Activated CD4-positive, alpha-beta T cell treated with anti-CD3 and anti-CD28 coated beads, Interleukin-2, amount 10 ng/mL, durations not matched to agents 7 days and 5 days (primary cell): ENCODE measurements at regions of chr12 and their contacts with region 1.

Region 1: DNA sequence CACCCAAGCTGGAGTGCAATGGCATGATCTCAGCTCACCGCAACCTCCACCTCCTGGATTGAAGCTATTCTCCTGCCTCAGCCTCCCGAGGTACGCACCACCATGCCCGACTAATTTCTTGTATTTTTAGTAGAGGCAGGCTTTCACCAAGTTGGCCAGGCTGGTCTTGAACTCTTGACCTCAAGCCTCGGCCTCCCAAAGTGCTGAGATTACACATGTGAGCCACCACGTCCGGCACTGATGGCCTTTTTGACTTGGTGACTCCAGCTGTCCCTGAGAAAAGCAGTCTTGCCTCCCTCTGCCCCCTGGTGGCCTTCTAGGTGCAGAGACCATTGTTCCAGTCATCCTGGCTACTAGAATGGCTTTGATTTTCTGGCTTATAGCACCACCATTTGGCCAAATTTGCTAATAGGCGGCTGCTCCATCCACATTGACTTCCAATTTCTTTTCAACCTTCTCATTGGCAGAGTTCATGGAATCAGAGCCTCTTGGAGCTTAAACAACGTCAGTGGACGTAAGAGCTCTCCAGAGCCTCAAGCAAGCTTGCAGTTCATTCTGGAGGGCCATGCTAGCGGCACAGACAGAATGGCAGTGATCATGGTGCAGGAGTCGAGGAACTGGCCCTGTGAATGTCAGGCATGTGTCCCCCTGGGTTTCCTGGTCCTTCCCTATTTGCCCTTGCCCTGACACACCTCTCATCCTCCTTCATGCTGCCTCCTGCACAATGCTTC is 25.4 kb upstream of the EIF4B start:
- DNase-seq: peak; percentile 89
- H3K4me3 Mint-ChIP-seq: no peak overlapping the region
- H3K27ac Mint-ChIP-seq: no peak overlapping the region
- H3K4me1 Mint-ChIP-seq: no peaks in the 10 kb centered on the region
- H3K27me3 Mint-ChIP-seq: peaks cover 21% of the 10 kb centered on the region

Region 2: GRCh38 chr12:52969828-52970569 is 10.9 kb before region 1 on chr12:
- CTCF ChIA-PET with region 1: interaction called, 11 read pairs
- POLR2A ChIA-PET with region 1: no interaction called
- DNase-seq: no peak
- H3K4me3 Mint-ChIP-seq: no peak overlapping the region
- H3K27ac Mint-ChIP-seq: no peak overlapping the region
- H3K4me1 Mint-ChIP-seq: no peaks in the 10 kb centered on the region
- H3K27me3 Mint-ChIP-seq: peaks cover 17% of the 10 kb centered on the region